Activated CD4-positive, alpha-beta memory T cell treated with anti-CD3 and anti-CD28 coated beads for 36 hours (primary cell): ENCODE measurements at regions of chr1 and their contacts with region 1.

Region 1: GRCh38 chr1:145845514-145846161 is at the start of gene NUDT17:
- DNase-seq: peak; percentile 80
- H3K4me3 Mint-ChIP-seq: no peak within 1 kb of the TSS
- H3K27ac Mint-ChIP-seq: peak within 1 kb of the TSS; percentile 12
- H3K4me1 Mint-ChIP-seq: peaks cover 11% of the 10 kb centered on the region
- H3K27me3 Mint-ChIP-seq: no peaks in the 10 kb centered on the region
- total RNA-seq, gene NUDT17: 2.8 to 3.8 TPM

Region 2: DNA sequence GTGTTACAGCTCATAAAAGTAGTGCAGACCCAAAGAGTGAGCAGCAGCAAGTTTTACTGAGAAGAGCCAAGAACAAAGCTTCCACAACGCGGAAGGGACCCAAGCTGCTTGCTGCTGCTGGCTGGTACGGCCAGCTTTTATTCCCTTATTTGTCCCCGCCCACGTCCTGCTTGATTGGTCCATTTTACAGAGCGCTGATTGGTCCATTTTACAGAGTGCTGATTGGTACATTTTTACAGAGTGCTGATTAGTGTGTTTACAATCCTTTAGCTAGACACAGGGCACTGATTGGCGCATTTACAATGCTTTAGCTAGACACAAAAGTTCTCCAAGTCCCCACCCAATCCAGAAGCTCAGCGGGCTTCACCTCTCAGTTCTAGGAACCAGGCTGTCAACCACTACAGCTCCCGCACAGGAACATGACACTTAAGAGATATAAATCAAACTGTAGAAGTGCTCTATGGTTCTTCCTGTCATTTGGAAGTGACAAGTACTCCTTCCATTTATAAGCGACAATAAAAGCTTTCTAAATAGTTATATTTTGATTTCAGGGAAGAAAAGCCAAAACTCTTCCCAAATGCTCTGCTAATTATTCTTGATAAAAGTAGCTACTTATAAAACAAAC is 50.3 kb before region 1 on chr1:
- CTCF ChIA-PET with region 1: no interaction called
- POLR2A ChIA-PET with region 1: no interaction called
- intact Hi-C with region 1: no loop called
- DNase-seq: no peak
- H3K4me3 Mint-ChIP-seq: no peak overlapping the region
- H3K27ac Mint-ChIP-seq: no peak overlapping the region
- H3K4me1 Mint-ChIP-seq: peaks cover 14% of the 10 kb centered on the region
- H3K27me3 Mint-ChIP-seq: no peaks in the 10 kb centered on the region

Region 3: DNA sequence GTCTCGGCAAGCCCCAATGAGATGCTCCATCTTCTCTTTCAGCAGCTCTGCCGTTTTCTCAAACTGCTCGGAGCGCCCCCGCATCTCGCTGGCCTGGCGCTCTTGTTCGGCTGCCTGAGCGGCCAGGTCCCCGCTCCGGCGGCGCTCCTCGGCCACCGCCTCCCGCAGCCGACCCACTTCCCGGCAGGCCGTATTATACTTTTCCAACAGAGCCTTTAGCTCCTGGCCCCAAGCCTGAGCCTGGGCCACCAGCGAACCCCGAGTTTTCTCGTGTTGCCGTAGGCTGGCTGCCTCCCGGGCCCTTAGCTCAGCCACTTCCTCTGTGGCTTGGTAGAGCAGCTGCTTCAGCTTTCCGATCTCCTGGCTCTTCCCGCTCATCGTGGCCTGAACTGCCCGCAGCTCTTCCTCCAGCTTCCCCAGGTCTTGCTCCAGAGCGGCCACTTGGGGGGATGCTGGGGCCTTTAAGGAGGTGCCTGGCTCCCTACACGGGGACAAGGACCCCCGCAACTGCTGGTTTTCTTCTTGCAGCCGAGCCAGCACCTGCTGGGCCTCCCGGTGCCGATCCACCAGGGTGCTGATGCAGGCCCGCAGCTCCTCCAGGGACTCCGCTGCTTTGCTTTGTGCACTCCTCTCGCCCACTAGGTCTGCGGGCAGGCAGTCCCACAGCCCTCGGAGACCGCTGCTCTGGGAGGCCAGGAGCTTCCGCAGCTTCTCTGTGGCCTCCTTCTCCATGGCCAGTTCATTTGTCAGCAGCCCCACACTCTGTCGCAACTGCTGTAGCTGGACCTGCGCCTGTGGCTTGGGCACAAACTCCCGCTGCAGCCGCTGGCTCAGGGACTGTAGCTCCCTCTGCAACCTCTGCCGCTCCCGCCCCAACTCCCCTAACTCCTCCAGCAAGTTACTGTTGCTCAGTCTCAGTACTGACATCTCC is 26.6 kb after region 1 on chr1:
- CTCF ChIA-PET with region 1: interaction called, 35 read pairs
- POLR2A ChIA-PET with region 1: no interaction called
- intact Hi-C with region 1: no loop called
- DNase-seq: peak; percentile 50
- H3K4me3 Mint-ChIP-seq: peak overlapping the region; percentile 70
- H3K27ac Mint-ChIP-seq: no peak overlapping the region
- H3K4me1 Mint-ChIP-seq: peaks cover 14% of the 10 kb centered on the region
- H3K27me3 Mint-ChIP-seq: no peaks in the 10 kb centered on the region

Region 4: GRCh38 chr1:145891587-145892485 is 46.2 kb after region 1 on chr1:
- CTCF ChIA-PET with region 1: interaction called, 35 read pairs
- POLR2A ChIA-PET with region 1: no interaction called
- intact Hi-C with region 1: no loop called
- DNase-seq: peak; percentile 74
- H3K4me3 Mint-ChIP-seq: no peak overlapping the region
- H3K27ac Mint-ChIP-seq: no peak overlapping the region
- H3K4me1 Mint-ChIP-seq: peaks cover 1% of the 10 kb centered on the region
- H3K27me3 Mint-ChIP-seq: no peaks in the 10 kb centered on the region

Region 5: GRCh38 chr1:145927063-145927886 is 81.6 kb after region 1 on chr1 and contains the start of gene RBM8A:
- CTCF ChIA-PET with region 1: interaction called, 14 read pairs
- POLR2A ChIA-PET with region 1: interaction called, 4 read pairs
- intact Hi-C with region 1: no loop called
- DNase-seq: peak; percentile 97
- H3K4me3 Mint-ChIP-seq: no peak within 1 kb of the TSS
- H3K27ac Mint-ChIP-seq: no peak within 1 kb of the TSS
- H3K4me1 Mint-ChIP-seq: peaks cover 25% of the 10 kb centered on the region
- H3K27me3 Mint-ChIP-seq: no peaks in the 10 kb centered on the region
- total RNA-seq, gene RBM8A: 275 to 277 TPM

Region 6: DNA sequence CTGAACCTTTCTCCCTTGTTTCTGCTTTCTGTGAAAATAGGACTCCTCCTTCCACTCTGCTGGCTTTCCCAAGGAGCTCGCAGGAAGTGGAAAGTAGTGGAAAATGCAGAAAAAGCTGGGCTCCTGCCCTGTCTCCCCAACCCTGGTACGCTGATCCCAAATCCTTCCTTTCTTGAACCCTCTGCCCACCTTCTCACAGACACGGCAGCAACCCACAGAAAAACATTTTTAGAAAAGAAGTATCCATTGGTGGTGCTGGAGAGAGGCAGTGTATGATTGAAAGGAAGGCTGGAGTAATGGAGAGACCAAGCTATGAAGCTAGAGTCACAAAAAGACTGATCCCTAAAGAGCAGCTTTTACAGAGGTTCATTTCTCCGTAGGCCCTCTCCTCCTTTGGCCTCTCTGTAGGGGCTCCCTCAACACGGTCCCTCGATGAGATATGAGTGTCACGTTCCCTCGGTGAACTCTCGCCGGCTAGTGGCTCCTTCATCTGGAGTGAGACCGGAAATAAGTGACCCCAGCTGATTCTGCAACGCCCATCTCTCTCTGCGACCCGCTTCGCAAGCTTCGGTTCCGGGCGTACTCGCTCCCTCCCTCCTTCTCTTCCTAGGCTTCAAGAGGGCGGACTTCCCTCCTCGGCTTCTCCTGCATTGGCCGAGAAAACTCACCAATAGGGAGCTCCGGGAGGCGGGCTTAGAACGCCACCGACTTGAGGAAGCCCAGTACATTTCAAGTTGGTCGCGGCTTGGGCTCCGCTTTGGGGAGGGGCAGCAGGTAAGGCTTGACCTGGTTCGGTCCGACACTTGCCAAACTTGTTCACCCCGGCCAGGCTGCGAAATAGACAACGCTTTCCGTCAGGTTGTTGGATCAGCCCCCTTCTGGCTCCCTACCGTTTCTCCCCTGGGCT is 118.6 kb after region 1 on chr1 and contains the starts of genes ANKRD34A and POLR3GL:
- CTCF ChIA-PET with region 1: interaction called, 29 read pairs
- POLR2A ChIA-PET with region 1: no interaction called
- intact Hi-C with region 1: no loop called
- DNase-seq: peak; percentile 96
- H3K4me3 Mint-ChIP-seq: peak within 1 kb of the TSS; percentile 98
- H3K27ac Mint-ChIP-seq: peak within 1 kb of the TSS; percentile 95
- H3K4me1 Mint-ChIP-seq: peaks cover 31% of the 10 kb centered on the region
- H3K27me3 Mint-ChIP-seq: no peaks in the 10 kb centered on the region
- total RNA-seq, gene ANKRD34A: 4.6 to 4.7 TPM
- total RNA-seq, gene POLR3GL: 27.3 to 30.9 TPM

Region 7: DNA sequence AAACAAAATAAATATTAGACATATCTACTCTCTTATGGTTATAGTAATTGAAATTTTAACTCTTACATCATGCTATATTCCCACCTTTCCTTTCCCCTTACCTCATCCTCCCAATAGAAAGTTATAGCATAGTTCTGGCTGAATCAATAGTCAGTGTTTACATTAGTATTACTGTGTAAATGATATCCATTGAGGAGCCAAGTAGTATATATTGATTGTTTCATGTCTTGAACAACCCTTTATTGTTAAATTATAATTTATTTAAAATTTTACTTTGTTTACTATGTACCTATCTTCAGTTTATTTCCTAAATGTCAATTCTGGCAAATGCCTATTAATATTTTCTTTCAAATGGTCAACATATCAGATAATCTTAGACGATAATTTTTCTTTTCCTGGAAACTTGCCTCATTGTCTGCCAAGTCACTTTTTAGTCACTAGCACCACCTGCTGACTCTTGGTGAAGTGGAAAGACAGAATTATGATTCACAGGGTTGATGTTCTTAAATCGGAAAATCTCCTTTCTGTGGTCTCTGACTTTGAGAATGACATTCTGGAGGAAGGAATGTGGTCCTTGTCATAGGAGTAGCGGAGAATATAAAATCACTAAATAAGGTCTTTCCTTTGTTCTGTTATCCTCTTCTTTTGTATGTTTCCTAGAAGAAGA is 167.2 kb after region 1 on chr1:
- CTCF ChIA-PET with region 1: interaction called, 36 read pairs
- POLR2A ChIA-PET with region 1: no interaction called
- intact Hi-C with region 1: loop called (anchors 1 kb)
- DNase-seq: peak; percentile 63
- H3K4me3 Mint-ChIP-seq: no peak overlapping the region
- H3K27ac Mint-ChIP-seq: no peak overlapping the region
- H3K4me1 Mint-ChIP-seq: peaks cover 10% of the 10 kb centered on the region
- H3K27me3 Mint-ChIP-seq: peaks cover 4% of the 10 kb centered on the region

Region 8: GRCh38 chr1:146036965-146037646 is 191.5 kb after region 1 on chr1:
- CTCF ChIA-PET with region 1: interaction called, 11 read pairs
- POLR2A ChIA-PET with region 1: no interaction called
- intact Hi-C with region 1: no loop called
- DNase-seq: peak; percentile 87
- H3K4me3 Mint-ChIP-seq: peak overlapping the region; percentile 100
- H3K27ac Mint-ChIP-seq: peak overlapping the region; percentile 99
- H3K4me1 Mint-ChIP-seq: peaks cover 32% of the 10 kb centered on the region
- H3K27me3 Mint-ChIP-seq: peaks cover 9% of the 10 kb centered on the region